ENCODE measurements at regions of chr2 and their contacts with region 1.

Region 1: DNA sequence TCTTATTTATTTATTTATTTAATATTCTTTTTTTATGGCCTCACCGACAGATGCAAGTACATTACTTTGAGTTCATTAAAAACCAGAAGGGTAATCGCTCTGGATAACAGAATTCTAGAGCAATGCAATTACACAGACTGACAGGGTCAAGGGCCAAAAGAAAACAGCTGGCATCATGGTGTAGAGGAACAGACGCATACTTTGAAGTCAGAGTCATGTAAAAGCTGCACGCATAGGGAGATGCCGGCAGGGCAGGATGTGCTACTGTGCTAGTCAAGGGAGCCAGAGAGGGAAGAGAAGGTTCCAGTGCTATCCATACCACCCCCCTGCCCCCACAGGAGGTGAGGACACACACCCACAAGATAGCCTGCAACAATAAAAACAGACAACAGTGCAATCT is 115.2 kb upstream of the TFCP2L1 start:
- DNase-seq: no peak
- H3K4me3 ChIP-seq: no peak overlapping the region
- H3K27ac ChIP-seq: no peak overlapping the region
- H3K4me1 ChIP-seq: no peaks in the 10 kb centered on the region
- H3K27me3 ChIP-seq: no peaks in the 10 kb centered on the region
- CTCF ChIP-seq: no peak
- EP300 ChIP-seq: no peak
- POLR2A ChIP-seq: no peak

Region 2: GRCh38 chr2:121205321-121205942 is 194.8 kb before region 1 on chr2:
- intact Hi-C with region 1: no loop called
- DNase-seq: no peak
- H3K4me3 ChIP-seq: no peak overlapping the region
- H3K27ac ChIP-seq: no peak overlapping the region
- H3K4me1 ChIP-seq: no peaks in the 10 kb centered on the region
- H3K27me3 ChIP-seq: no peaks in the 10 kb centered on the region
- CTCF ChIP-seq: no peak
- EP300 ChIP-seq: no peak
- POLR2A ChIP-seq: no peak

Region 3: GRCh38 chr2:121446647-121447241 is 46.5 kb after region 1 on chr2:
- intact Hi-C with region 1: no loop called
- DNase-seq: no peak
- H3K4me3 ChIP-seq: no peak overlapping the region
- H3K27ac ChIP-seq: no peak overlapping the region
- H3K4me1 ChIP-seq: peaks cover 0 to 12% (median 10%) of the 10 kb centered on the region in 4 donors
- H3K27me3 ChIP-seq: no peaks in the 10 kb centered on the region
- CTCF ChIP-seq: no peak
- EP300 ChIP-seq: no peak
- POLR2A ChIP-seq: no peak

Region 4: DNA sequence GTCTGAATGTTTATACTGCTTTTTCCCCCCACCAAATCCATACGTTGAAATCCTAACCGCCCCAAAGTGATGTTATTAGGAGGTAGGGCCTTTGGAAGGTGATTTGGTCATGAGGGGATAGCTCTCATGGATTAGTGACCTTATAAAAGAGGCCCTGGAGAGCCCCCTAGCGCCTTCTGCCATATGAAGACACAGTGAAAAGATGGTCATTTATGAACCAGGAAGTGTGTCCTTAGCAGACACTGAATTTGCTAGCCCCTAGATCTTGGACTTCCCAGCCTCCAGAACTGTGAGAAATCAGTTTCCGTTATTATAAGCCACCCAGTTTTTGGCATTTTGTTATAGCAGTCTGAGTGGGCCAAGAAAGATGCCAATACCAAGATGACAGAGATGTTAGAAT is 348.0 kb after region 1 on chr2:
- intact Hi-C with region 1: loop called (anchors 10 kb)
- DNase-seq: no peak
- H3K4me3 ChIP-seq: no peak overlapping the region
- H3K27ac ChIP-seq: no peak overlapping the region
- H3K4me1 ChIP-seq: no peaks in the 10 kb centered on the region
- H3K27me3 ChIP-seq: no peaks in the 10 kb centered on the region
- CTCF ChIP-seq: no peak
- EP300 ChIP-seq: no peak
- POLR2A ChIP-seq: no peak

Region 5: DNA sequence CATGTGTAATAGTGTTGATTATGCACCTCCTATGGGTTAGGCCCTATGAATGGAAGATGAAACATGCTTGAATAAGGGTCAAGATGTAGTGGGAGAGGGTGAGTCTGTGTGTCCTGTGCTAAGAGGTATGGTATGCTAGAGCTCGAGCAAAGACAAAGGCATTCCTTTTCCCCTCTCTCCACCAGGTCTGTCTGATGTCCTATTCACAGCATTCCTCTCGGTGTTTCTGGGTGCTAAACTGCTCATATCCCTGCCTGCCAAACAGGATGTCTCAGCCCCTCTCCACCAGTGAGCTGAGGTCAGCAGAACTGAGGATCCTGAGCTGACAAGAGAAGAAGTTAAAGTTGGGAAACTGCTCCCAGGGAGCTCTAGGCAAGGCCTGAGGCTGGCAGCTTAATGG is 700.1 kb after region 1 on chr2:
- intact Hi-C with region 1: no loop called
- DNase-seq: no peak
- H3K4me3 ChIP-seq: no peak overlapping the region
- H3K27ac ChIP-seq: no peak overlapping the region
- H3K4me1 ChIP-seq: no peaks in the 10 kb centered on the region
- H3K27me3 ChIP-seq: no peaks in the 10 kb centered on the region
- CTCF ChIP-seq: no peak
- EP300 ChIP-seq: no peak
- POLR2A ChIP-seq: no peak